ENCODE measurements at regions of chr5 and their contacts with region 1.

Region 1: GRCh38 chr5:96312383-96312782 is 120.7 kb downstream of the PCSK1 start:
- DNase-seq: no peak
- H3K4me3 Mint-ChIP-seq: no peak overlapping the region
- H3K27ac Mint-ChIP-seq: no peak overlapping the region
- H3K4me1 Mint-ChIP-seq: no peaks in the 10 kb centered on the region
- H3K27me3 Mint-ChIP-seq: peaks cover 15% of the 10 kb centered on the region

Region 2: DNA sequence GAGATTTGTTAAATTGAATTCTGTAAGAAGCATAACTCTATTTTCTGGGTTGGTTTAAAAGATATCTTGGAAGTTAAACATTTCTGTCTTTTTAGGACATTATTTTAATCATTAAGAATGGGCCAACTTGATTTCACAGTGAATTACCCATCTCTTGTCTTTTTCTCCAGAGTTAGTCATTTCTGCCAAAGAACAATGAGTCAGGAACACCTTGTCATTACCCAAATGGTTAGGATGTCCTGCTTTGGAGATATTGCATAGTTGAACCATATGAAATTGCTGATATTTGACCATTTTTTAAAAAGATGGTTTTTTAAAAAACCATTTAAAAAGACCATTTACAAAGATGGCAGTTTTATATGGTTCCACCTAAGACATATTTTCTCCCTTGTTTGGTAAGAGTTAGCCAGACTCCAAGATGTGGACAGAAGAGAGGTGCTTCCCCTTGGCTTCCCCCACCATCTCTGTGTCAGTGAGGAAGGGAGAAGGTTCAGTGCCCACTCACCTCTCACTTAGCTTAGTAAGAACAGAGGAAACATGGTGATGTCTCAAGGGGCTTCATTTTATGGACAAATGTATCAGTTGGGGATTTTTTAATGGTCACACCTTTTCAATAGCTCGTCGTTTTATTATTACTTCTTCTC is 17.6 kb after region 1 on chr5:
- CTCF ChIA-PET with region 1: no interaction called
- intact Hi-C with region 1: loop called (anchors 1 kb)
- DNase-seq: no peak
- H3K4me3 Mint-ChIP-seq: no peak overlapping the region
- H3K27ac Mint-ChIP-seq: no peak overlapping the region
- H3K4me1 Mint-ChIP-seq: peaks cover 3% of the 10 kb centered on the region
- H3K27me3 Mint-ChIP-seq: peaks cover 13% of the 10 kb centered on the region

Region 3: GRCh38 chr5:96402500-96402899 is 90.1 kb after region 1 on chr5:
- CTCF ChIA-PET with region 1: no interaction called
- intact Hi-C with region 1: no loop called
- DNase-seq: no peak
- H3K4me3 Mint-ChIP-seq: no peak overlapping the region
- H3K27ac Mint-ChIP-seq: no peak overlapping the region
- H3K4me1 Mint-ChIP-seq: no peaks in the 10 kb centered on the region
- H3K27me3 Mint-ChIP-seq: no peaks in the 10 kb centered on the region

Region 4: GRCh38 chr5:96427823-96428222 is 115.4 kb after region 1 on chr5:
- CTCF ChIA-PET with region 1: no interaction called
- intact Hi-C with region 1: no loop called
- DNase-seq: no peak
- H3K4me3 Mint-ChIP-seq: no peak overlapping the region
- H3K27ac Mint-ChIP-seq: no peak overlapping the region
- H3K4me1 Mint-ChIP-seq: peaks cover 8% of the 10 kb centered on the region
- H3K27me3 Mint-ChIP-seq: peaks cover 35% of the 10 kb centered on the region